Aorta (tissue), 5 donors: ENCODE measurements at regions of chr7 and their contacts with region 1.

Region 1: GRCh38 chr7:27739909-27740448 is at the start of gene TAX1BP1:
- DNase-seq: peak; percentile 98 to 99
- ATAC-seq: peak; percentile 100
- H3K4me3 ChIP-seq: peak within 1 kb of the TSS; percentile 63 to 98
- H3K27ac ChIP-seq: peak within 1 kb of the TSS; percentile 91 to 97
- H3K4me1 ChIP-seq: no peaks in the 10 kb centered on the region
- H3K27me3 ChIP-seq: no peaks in the 10 kb centered on the region
- total RNA-seq, gene TAX1BP1: 93.1 to 113 TPM

Region 2: DNA sequence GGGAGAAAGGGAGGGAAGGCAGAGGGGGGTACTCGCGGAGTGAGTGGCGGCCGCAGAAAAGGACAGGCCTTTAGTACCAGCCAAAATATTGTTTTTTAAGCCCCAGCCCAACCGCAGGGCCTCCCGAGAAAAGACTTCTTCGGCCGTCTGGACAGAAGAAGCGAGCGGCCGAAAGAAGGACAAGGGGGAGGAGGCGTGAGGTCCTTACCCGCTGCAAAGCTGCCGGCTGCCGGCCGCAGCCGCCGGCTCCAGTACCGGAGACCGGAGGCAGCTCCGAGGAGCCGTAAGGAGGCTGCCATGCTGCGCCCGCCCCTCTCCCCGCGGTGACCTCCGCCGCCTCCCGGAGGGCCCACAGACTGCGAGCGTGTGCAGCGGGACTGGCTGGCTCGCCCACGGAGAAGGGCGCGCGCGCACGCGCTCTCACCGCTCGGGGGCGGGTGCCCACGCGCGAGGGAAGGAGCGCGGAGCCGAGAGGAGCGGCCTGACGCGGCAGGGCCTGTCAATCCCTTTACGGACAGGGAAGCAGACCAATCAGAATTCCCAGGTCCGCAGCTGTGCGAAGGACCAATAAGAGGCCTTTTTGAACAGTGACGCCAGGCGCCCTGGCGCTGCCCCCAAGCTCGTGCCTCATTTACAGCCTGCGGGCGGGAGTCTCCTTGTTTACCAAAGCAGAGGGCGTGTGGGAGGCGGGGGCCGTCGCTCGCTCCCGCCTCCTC is 77.3 kb before region 1 on chr7 and contains the start of gene HIBADH:
- intact Hi-C with region 1: loop called (anchors 2 to 5 kb)
- DNase-seq: peak; percentile 99 to 100
- ATAC-seq: peak; percentile 99
- H3K4me3 ChIP-seq: peak within 1 kb of the TSS; percentile 72 to 77
- H3K27ac ChIP-seq: peak within 1 kb of the TSS in 1 of 2 donors; percentile 43
- H3K4me1 ChIP-seq: no peaks in the 10 kb centered on the region
- H3K27me3 ChIP-seq: no peaks in the 10 kb centered on the region
- total RNA-seq, gene HIBADH: 22.4 to 31.0 TPM

Region 3: GRCh38 chr7:27677912-27678612 is 61.9 kb before region 1 on chr7:
- intact Hi-C with region 1: loop called (anchors 1 to 5 kb)
- DNase-seq: no peak
- ATAC-seq: peak; percentile 89
- H3K4me3 ChIP-seq: no peak overlapping the region
- H3K27ac ChIP-seq: peak overlapping the region; percentile 93 to 96
- H3K4me1 ChIP-seq: peaks cover 0 to 8% of the 10 kb centered on the region in 2 donors
- H3K27me3 ChIP-seq: no peaks in the 10 kb centered on the region

Region 4: DNA sequence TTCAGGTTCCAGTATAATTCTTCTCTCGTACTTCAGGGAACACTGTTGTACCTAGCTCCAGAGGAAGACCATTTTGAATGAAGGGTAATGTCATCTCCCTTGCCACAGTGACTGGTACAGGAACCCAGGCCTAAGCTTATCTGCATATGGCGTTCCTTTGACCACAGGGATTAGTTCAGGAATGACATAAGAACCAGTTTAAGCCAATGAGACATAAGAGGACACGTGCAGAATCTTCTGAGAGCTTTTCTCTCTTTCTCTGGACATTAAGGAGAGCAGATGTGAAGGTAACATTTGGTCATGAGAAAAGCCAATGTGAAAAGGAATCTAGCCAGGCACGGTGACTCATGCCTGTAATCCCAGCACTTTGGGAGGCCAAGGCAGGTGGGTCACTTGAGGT is 55.5 kb before region 1 on chr7:
- intact Hi-C with region 1: loop called in 1 of 2 experiments (anchors 5 kb)
- DNase-seq: no peak
- ATAC-seq: no peak
- H3K4me3 ChIP-seq: no peak overlapping the region
- H3K27ac ChIP-seq: no peak overlapping the region
- H3K4me1 ChIP-seq: no peaks in the 10 kb centered on the region
- H3K27me3 ChIP-seq: no peaks in the 10 kb centered on the region

Region 5: GRCh38 chr7:27784393-27785053 is 44.5 kb after region 1 on chr7:
- intact Hi-C with region 1: loop called (anchors 5 kb)
- DNase-seq: no peak
- ATAC-seq: no peak
- H3K4me3 ChIP-seq: no peak overlapping the region
- H3K27ac ChIP-seq: no peak overlapping the region
- H3K4me1 ChIP-seq: peaks cover 0 to 3% of the 10 kb centered on the region in 2 donors
- H3K27me3 ChIP-seq: no peaks in the 10 kb centered on the region

Region 6: DNA sequence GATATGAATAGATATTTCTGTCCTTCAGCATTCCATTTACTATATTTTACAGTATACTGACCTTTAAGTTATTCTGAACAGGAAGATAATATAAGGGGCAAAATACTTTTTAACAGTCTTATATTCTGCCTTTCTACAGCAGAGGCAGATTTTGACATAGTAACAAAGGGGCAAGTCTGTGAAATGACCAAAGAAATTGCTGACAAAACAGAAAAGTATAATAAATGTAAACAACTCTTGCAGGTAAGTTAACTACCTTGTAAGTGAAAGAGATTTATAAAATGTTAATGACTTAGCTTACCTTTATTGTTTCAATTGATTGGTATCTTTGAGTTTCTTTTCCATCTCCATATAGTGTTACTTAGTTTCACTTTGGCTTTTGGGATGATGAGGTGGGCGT is 56.0 kb after region 1 on chr7:
- intact Hi-C with region 1: no loop called
- DNase-seq: no peak
- ATAC-seq: no peak
- H3K4me3 ChIP-seq: no peak overlapping the region
- H3K27ac ChIP-seq: no peak overlapping the region
- H3K4me1 ChIP-seq: no peaks in the 10 kb centered on the region
- H3K27me3 ChIP-seq: no peaks in the 10 kb centered on the region

Region 7: GRCh38 chr7:27921081-27921836 is 181.3 kb after region 1 on chr7:
- intact Hi-C with region 1: loop called in 1 of 2 experiments (anchors 10 kb)
- DNase-seq: no peak
- ATAC-seq: peak; percentile 60
- H3K4me3 ChIP-seq: no peak overlapping the region
- H3K27ac ChIP-seq: no peak overlapping the region
- H3K4me1 ChIP-seq: no peaks in the 10 kb centered on the region
- H3K27me3 ChIP-seq: no peaks in the 10 kb centered on the region

Region 8: GRCh38 chr7:28020302-28020940 is 280.4 kb after region 1 on chr7:
- intact Hi-C with region 1: loop called in 1 of 2 experiments (anchors 10 kb)
- DNase-seq: peak in 1 of 2 donors; percentile 68
- ATAC-seq: peak; percentile 93
- H3K4me3 ChIP-seq: no peak overlapping the region
- H3K27ac ChIP-seq: no peak overlapping the region
- H3K4me1 ChIP-seq: no peaks in the 10 kb centered on the region
- H3K27me3 ChIP-seq: no peaks in the 10 kb centered on the region

Region 9: DNA sequence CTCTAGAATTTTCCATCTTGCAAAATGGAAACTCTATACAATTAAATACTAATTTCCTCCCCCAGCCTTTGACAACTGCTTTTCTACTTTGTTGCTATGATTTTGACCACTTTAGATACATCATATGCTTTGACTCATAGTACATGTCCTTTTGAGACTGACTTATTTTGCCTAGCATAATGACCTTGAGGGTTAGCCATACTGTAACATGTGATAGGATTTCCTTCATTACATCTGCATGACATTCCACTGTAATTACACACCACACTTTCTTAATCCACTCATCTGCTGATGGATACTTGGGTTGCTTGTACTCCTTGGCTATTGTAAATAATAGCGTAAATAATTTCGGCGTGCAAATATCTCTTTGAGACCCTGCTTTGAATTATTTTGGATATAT is 313.0 kb after region 1 on chr7:
- intact Hi-C with region 1: no loop called
- DNase-seq: no peak
- ATAC-seq: no peak
- H3K4me3 ChIP-seq: no peak overlapping the region
- H3K27ac ChIP-seq: no peak overlapping the region
- H3K4me1 ChIP-seq: no peaks in the 10 kb centered on the region
- H3K27me3 ChIP-seq: no peaks in the 10 kb centered on the region